Calu3 (cell line): ENCODE measurements at regions of chr12 and their contacts with region 1.

Region 1: DNA sequence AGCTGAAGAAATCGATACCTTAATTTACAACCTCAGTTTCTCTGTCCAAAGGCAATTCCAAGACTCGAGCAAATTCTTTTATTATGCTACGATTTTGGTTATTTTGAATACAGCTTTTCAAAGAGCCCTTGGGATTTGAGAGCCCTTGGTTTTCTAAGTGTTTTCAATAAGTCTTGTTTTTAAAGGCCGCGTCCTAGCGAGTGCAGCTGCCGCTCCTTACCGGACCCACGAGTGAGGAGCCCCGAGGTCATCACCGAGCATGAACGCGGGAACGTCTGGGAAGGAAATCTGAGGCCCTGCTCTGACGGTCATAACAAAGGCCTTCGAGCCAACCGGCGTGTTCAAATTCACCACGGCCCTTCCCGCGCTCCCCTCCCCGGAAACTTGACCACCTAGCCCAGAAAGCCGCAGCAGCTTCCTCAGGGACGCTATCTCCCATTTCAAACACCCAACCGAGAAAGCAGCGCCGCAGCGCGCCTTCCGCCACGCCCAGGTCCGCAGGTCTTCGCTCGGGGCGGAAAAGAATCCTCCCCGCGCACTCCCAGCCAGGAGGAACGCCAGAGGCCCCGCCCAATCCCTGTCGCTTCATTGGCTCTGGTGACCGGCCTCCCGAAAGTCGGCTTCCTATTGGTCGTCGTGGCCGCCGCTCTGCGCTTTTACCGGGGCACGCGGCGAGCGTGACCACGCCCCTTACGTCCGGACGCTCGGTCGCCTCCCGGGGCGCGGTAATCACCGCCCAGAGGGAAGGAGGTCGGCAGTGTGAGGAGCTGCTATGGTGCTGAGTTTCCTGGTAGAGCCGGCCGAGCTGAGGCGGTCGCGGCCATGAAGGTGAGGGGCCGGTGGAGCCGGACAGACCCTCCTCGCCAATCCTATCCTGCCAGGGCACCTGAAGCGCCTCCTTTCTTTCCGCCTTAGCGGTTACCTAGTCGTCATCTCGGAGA is at the start of gene RNF34:
- DNase-seq: peak; percentile 99
- H3K4me3 Mint-ChIP-seq: peak within 1 kb of the TSS; percentile 72
- H3K27ac Mint-ChIP-seq: peak within 1 kb of the TSS; percentile 45
- H3K4me1 Mint-ChIP-seq: peaks cover 9% of the 10 kb centered on the region
- H3K27me3 Mint-ChIP-seq: no peaks in the 10 kb centered on the region
- CTCF ChIP-seq: no peak
- total RNA-seq, gene RNF34: 79.5 and 82.0 TPM in 2 replicates

Region 2: DNA sequence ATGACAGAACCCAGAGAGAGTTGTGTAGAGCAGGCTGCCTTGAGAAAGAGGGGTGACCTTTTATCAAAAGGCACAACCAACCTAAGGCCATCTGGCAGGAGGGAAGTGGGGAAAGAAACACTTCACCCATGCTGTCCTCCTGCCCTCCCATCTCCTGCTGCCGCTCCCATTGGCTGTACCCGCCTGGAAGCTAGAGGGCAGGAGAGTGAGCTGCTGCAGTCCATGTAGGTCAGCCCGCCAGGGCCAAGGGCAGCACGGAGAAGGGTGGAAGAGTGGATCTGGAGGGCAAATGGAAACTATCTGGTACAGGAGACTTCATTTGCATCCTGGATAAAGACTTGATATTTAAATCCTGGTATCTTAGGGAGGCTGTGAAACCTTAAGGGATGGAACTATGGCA is 770.7 kb before region 1 on chr12:
- CTCF ChIA-PET with region 1: interaction called, 11 read pairs
- intact Hi-C with region 1: no loop called
- DNase-seq: no peak
- H3K4me3 Mint-ChIP-seq: no peak overlapping the region
- H3K27ac Mint-ChIP-seq: no peak overlapping the region
- H3K4me1 Mint-ChIP-seq: no peaks in the 10 kb centered on the region
- H3K27me3 Mint-ChIP-seq: peaks cover 37% of the 10 kb centered on the region
- CTCF ChIP-seq: no peak

Region 3: GRCh38 chr12:120902846-120903410 is 496.7 kb before region 1 on chr12:
- CTCF ChIA-PET with region 1: no interaction called
- intact Hi-C with region 1: no loop called
- DNase-seq: no peak
- H3K4me3 Mint-ChIP-seq: peak overlapping the region; percentile 94
- H3K27ac Mint-ChIP-seq: peak overlapping the region; percentile 68
- H3K4me1 Mint-ChIP-seq: peaks cover 18% of the 10 kb centered on the region
- H3K27me3 Mint-ChIP-seq: no peaks in the 10 kb centered on the region
- CTCF ChIP-seq: no peak

Region 4: DNA sequence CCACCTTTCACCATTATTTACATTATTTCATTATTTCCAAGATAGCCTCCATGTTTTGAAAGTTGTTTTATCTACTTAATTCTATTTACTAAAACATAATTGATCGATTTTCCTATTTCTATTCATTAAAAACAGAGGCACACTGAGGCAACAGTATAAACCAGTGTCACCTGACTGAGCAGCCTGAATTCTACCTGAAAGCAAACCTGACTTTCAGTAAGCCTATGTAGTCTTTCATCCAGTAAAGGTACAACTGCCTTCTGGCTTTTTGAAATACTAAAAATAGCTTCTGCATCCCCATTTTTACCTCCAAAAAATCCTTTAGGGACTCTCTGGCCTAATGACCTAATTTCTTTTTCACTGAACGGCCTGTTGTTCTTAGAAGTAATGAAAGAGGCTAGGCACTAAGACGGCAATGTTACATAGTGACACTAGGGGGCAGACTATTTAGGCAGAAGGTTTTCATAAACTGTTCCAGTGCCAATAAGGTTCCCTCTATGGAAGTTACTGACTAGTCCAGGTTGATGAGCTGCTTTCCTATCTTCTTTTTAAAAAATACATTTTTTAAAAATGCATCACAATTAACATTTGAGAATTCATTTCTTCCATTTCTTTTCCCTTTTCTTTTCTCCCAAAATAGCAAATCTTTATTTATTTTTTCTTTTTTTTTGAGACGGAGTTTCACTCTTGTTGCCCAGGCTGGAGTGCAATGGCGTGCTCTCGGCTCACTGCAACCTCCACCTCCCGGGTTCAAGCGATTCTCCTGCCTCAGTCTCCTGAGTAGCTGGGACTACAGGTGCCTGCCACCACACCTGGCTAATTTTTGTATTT is 64.9 kb before region 1 on chr12:
- CTCF ChIA-PET with region 1: interaction called, 11 read pairs
- intact Hi-C with region 1: loop called (anchors 5 kb)
- DNase-seq: peak; percentile 37
- H3K4me3 Mint-ChIP-seq: no peak overlapping the region
- H3K27ac Mint-ChIP-seq: no peak overlapping the region
- H3K4me1 Mint-ChIP-seq: peaks cover 21% of the 10 kb centered on the region
- H3K27me3 Mint-ChIP-seq: no peaks in the 10 kb centered on the region
- CTCF ChIP-seq: peak; percentile 59

Region 5: GRCh38 chr12:121351820-121352681 is 47.6 kb before region 1 on chr12 and contains the start of gene ANAPC5:
- CTCF ChIA-PET with region 1: interaction called, 3 read pairs
- intact Hi-C with region 1: loop called (anchors 5 kb)
- DNase-seq: peak; percentile 94
- H3K4me3 Mint-ChIP-seq: peak within 1 kb of the TSS; percentile 100
- H3K27ac Mint-ChIP-seq: peak within 1 kb of the TSS; percentile 100
- H3K4me1 Mint-ChIP-seq: peaks cover 18% of the 10 kb centered on the region
- H3K27me3 Mint-ChIP-seq: no peaks in the 10 kb centered on the region
- CTCF ChIP-seq: no peak
- total RNA-seq, gene ANAPC5: 150 and 153 TPM in 2 replicates